Activated CD8-positive, alpha-beta T cell treated with anti-CD3 and anti-CD28 coated beads for 36 hours (primary cell): ENCODE measurements at regions of chr11 and their contacts with region 1.

Region 1: DNA sequence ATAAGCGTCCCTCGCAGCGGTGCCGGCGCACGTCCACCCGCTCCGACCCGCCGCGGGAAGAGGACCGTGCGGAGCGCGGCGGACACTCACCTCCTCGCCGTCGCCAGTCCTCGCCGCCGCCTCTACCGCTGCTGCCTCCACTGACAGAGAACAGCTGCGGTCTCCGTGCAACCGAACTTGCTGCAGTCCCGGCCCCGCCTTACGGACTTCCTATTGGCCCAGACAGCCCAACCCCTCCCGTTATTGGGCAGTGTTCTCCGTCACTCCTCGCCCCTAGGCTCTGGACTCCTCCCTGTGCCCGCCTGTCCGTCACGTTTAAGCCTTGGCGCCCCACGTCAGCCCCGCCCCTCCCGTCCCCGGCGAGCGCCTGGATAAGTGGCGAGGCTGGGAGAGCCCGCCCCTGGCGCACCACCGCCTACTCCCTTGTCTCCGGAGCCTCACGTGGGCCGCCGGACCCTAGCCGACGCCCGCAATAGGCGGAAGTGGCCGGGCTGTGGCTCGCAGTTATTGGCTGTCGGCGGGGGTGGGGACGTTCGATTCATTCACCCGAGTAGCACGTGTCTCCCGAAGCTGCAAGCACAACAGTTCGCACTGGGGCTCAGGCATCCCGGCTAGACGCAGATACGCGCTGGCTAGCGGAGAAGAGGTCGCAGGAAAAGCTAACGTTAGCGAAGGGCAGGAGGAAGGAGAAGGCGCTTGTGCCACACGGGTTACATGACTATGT is at the start of gene PC:
- DNase-seq: peak; percentile 99
- ATAC-seq: peak; percentile 98
- H3K4me3 Mint-ChIP-seq: peak within 1 kb of the TSS; percentile 69
- H3K27ac Mint-ChIP-seq: peak within 1 kb of the TSS; percentile 78
- H3K4me1 Mint-ChIP-seq: peaks cover 20% of the 10 kb centered on the region
- H3K27me3 Mint-ChIP-seq: peaks cover 1% of the 10 kb centered on the region
- CTCF ChIP-seq: no peak
- total RNA-seq, gene PC: 5.6 to 6.5 TPM

Region 2: GRCh38 chr11:66970808-66971442 is 12.5 kb after region 1 on chr11:
- CTCF ChIA-PET with region 1: interaction called, 3 read pairs
- POLR2A ChIA-PET with region 1: interaction called, 11 read pairs
- intact Hi-C with region 1: no loop called
- DNase-seq: peak; percentile 51
- ATAC-seq: peak; percentile 91
- H3K4me3 Mint-ChIP-seq: no peak overlapping the region
- H3K27ac Mint-ChIP-seq: peak overlapping the region; percentile 41
- H3K4me1 Mint-ChIP-seq: peaks cover 8% of the 10 kb centered on the region
- H3K27me3 Mint-ChIP-seq: peaks cover 6% of the 10 kb centered on the region
- CTCF ChIP-seq: no peak